ENCODE measurements at regions of chr14 and their contacts with region 1.

Region 1: GRCh38 chr14:106327234-106327633 is 800.9 kb downstream of the TMEM121 start:
- DNase-seq: no peak
- H3K4me3 ChIP-seq: no peak overlapping the region
- H3K27ac ChIP-seq: no peak overlapping the region
- H3K4me1 ChIP-seq: no peaks in the 10 kb centered on the region
- H3K27me3 ChIP-seq: no peaks in the 10 kb centered on the region
- CTCF ChIP-seq: no peak
- POLR2A ChIP-seq: no peak

Region 2: GRCh38 chr14:106107703-106108102 is 219.5 kb before region 1 on chr14:
- CTCF ChIA-PET with region 1: no interaction called
- POLR2A ChIA-PET with region 1: no interaction called
- dilution Hi-C with region 1: no loop called
- intact Hi-C with region 1: no loop called
- DNase-seq: no peak
- H3K4me3 ChIP-seq: no peak overlapping the region
- H3K27ac ChIP-seq: no peak overlapping the region
- H3K4me1 ChIP-seq: no peaks in the 10 kb centered on the region
- H3K27me3 ChIP-seq: no peaks in the 10 kb centered on the region
- CTCF ChIP-seq: no peak
- POLR2A ChIP-seq: no peak

Region 3: DNA sequence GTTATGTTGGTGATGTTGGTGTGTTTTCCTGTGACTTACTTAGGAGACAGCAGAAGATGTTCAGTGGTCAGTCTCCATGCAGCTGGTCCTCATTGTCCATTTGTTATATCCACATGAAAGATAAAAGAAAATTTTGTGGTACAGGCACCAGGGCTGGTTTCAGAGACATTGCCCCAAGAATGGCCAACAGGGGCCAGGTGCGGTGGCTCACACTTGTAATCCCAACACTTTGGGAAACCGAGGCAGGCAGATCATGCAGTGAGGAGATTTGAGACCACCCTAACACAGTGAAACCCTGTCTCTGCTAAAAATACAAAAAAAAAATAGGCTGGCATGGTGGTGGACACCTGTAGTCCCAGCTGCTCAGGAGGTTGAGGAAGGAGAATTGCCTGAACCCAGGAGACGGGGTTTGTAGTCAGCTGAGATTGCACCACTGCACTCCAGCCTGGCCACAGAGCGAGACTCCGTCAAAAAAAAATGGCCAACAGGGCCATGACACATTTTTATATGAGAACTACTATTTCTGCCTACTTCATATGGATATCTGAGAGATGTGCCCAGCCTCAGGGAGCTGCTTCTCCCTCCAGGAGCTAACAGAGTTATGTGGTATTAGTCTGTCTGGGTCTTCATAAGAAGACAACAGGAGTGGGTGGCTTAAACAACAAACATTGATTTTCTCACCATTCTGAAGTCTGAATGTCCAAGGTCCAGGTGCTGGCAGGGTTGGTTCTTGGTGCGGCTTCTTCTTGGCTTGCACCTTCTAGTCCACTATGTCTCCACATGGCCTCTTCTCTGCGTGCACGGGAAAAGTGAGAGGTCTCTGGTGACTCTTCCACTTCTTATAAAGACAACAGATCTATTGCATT is 20.9 kb after region 1 on chr14:
- CTCF ChIA-PET with region 1: no interaction called
- POLR2A ChIA-PET with region 1: no interaction called
- dilution Hi-C with region 1: no loop called
- intact Hi-C with region 1: loop called (anchors 1 kb)
- DNase-seq: no peak
- H3K4me3 ChIP-seq: no peak overlapping the region
- H3K27ac ChIP-seq: no peak overlapping the region
- H3K4me1 ChIP-seq: no peaks in the 10 kb centered on the region
- H3K27me3 ChIP-seq: no peaks in the 10 kb centered on the region
- CTCF ChIP-seq: no peak
- POLR2A ChIP-seq: no peak